ENCODE measurements at regions of chr5 and their contacts with region 1.

Region 1: DNA sequence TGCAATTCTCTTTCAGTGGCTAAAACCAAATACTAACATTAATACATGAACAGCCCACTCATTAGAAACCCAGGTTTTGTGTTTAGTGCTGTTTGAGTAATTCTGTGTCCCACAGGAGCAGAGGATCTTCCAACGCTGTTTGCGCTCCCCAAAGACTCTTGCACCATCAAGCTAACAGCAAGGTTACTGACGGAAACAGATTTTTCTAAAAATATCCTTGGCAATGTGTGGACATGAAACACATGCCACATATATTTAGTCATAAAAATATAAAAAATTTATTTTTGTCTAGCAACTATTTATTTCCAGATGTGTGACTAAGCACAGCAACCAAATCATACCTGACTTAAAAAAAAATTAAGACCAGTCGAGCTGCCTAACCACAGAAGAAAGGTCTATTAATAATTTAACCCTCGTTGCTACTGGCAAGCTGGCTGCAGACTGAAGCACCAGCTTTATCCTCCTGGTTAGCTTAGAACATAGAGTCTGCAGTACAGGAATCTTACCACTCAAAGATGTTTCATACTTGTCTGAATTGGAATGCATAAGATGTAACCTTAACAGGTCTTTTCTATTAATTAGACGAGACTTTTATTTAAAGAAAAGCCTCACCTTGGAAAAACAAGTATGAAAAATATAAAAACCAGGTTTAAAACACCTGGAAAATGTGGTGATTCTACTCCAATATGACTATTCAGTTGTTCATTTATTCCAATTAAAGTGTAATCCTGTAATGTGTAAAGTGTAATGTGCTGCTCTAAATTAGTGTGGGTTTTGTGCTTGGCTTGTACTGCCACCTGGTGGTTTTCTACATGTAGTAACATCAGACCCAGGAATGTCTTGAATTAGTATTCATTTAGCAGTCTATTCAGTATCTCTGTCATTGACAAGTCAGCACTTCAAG is 272.5 kb downstream of the EPB41L4A start:
- DNase-seq: peak; percentile 60 to 78 (median 63)
- ATAC-seq: peak; percentile 90
- H3K4me3 ChIP-seq: no peak overlapping the region
- H3K27ac ChIP-seq: no peak overlapping the region
- H3K4me1 ChIP-seq: no peaks in the 10 kb centered on the region
- H3K27me3 ChIP-seq: no peaks in the 10 kb centered on the region
- CTCF ChIP-seq: peak; percentile 68 to 94 (median 87)
- POLR2A ChIP-seq: no peak

Region 2: DNA sequence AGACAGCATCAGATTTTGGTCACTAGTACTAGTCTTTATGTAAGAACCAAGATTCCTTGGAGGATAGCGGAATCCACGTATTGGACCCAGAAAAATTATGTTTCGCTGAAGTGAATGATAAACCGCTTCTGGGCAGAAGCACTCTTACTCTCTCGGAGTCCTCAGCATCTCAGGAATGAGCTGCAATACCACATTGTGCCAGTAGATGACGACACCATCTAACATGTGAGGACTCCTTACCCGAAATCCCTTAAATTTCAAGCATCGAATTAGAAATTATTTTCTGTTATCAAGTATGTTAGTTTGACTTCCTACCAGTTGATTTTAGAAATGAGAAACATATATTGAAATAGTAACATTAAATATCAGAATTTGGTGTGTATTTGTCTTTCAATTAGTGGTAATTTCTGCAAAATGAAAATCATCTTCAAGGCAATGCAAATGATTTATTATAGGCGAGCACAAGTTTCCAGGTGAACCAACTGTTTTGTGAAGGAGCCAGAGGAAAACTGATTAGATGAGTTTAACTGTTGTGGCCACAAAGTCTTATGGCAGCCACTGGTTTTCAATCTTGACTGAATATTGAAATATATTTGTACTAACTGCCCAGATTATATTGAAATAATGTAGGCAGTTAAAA is 988.4 kb before region 1 on chr5:
- intact Hi-C with region 1: loop called (anchors 10 kb)
- DNase-seq: peak; percentile 67 to 84 (median 76)
- ATAC-seq: peak; percentile 78
- H3K4me3 ChIP-seq: no peak overlapping the region
- H3K27ac ChIP-seq: no peak overlapping the region
- H3K4me1 ChIP-seq: no peaks in the 10 kb centered on the region
- H3K27me3 ChIP-seq: no peaks in the 10 kb centered on the region
- CTCF ChIP-seq: peak; percentile 85 to 99 (median 96)
- POLR2A ChIP-seq: no peak

Region 3: GRCh38 chr5:111550279-111551020 is 596.1 kb before region 1 on chr5:
- intact Hi-C with region 1: loop called (anchors 5 kb)
- DNase-seq: peak; percentile 73 to 84 (median 74)
- ATAC-seq: peak; percentile 74
- H3K4me3 ChIP-seq: no peak overlapping the region
- H3K27ac ChIP-seq: peak overlapping the region in 1 of 4 donors; percentile 30
- H3K4me1 ChIP-seq: peaks cover 10% of the 10 kb centered on the region
- H3K27me3 ChIP-seq: no peaks in the 10 kb centered on the region
- CTCF ChIP-seq: peak; percentile 53 to 67 (median 65)
- POLR2A ChIP-seq: no peak

Measured in body of pancreas (tissue), 4 donors.